ENCODE measurements at regions of chr1 and their contacts with region 1.

Region 1: DNA sequence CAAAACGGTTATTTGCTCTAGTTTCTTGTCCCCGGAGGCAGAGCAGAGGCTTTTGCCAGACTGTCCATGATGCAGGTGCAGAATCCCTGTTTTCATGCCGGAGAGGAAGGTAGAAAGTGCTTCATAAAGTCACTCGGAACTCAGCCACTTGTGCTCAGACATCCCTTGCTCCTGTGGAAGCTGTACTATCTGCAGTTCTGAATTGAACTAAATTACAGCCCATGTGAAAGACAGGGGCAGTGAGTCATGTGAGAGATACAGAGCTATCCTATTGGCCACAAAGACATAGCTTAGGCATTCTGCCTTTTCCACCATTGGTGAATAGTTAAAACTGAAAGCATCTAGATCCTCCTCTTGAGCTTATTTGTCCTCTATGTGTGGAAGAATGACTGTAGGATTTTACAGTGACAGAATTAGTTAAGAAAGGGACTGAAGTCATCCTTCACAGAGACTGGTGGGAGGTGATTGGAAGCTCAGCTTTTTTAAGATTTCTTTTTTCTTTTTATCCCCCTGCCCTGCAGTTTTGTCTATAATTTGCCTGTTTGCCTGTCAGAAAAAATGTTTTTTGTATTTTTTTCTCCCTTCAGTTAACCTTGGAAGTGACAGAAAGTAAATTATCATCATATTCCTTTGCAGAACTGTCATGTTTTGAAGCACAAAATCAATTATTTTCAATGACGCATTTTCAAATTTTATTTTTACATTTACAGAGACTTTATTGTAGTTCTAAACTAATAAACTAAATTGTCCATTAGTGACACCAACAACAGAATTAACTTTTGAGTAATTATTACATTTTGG is 298.6 kb downstream of the PTPRC start:
- DNase-seq: peak in 40 of 42 donors; percentile 5 to 93 (median 76)

Region 2: DNA sequence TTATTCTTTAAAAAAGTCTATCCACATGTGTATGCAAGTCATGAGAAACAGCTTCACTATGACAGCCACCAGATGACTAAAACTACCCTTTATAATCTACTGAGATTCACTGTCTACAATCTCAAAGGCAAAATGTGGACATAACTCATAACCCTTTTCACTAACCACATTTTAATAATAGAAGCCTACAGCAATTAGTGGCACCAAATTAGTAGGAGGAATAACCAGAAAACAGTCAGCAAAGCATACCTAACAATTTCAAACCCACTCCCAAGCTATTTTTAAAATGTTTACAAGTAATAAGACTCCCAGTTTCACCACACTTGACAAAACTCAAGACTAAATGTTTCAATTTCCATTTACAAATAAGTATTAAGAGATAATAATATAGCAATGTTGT is 144.3 kb after region 1 on chr1:
- intact Hi-C with region 1: loop called (anchors 2 kb)
- DNase-seq: no peak

Region 3: GRCh38 chr1:199113265-199113869 is 175.9 kb after region 1 on chr1:
- intact Hi-C with region 1: loop called (anchors 10 kb)
- DNase-seq: peak in 41 of 42 donors; percentile 33 to 89 (median 71)